Panc1 (cell line): ENCODE measurements at regions of chr5 and their contacts with region 1.

Region 1: GRCh38 chr5:140273401-140273877 is 29.5 kb downstream of the PFDN1 start:
- DNase-seq: no peak
- ATAC-seq: no peak
- H3K4me3 ChIP-seq: no peak overlapping the region
- H3K27ac ChIP-seq: no peak overlapping the region
- H3K4me1 ChIP-seq: no peaks in the 10 kb centered on the region
- H3K27me3 ChIP-seq: no peaks in the 10 kb centered on the region
- CTCF ChIP-seq: no peak

Region 2: GRCh38 chr5:140094889-140095288 is 178.6 kb before region 1 on chr5:
- CTCF ChIA-PET with region 1: no interaction called
- POLR2A ChIA-PET with region 1: no interaction called
- in situ Hi-C with region 1: no loop called
- intact Hi-C with region 1: no loop called
- DNase-seq: no peak
- ATAC-seq: no peak
- H3K4me3 ChIP-seq: no peak overlapping the region
- H3K27ac ChIP-seq: no peak overlapping the region
- H3K4me1 ChIP-seq: no peaks in the 10 kb centered on the region
- H3K27me3 ChIP-seq: peaks cover 4% of the 10 kb centered on the region; the same call in 1 of the 2 replicates
- CTCF ChIP-seq: no peak

Region 3: DNA sequence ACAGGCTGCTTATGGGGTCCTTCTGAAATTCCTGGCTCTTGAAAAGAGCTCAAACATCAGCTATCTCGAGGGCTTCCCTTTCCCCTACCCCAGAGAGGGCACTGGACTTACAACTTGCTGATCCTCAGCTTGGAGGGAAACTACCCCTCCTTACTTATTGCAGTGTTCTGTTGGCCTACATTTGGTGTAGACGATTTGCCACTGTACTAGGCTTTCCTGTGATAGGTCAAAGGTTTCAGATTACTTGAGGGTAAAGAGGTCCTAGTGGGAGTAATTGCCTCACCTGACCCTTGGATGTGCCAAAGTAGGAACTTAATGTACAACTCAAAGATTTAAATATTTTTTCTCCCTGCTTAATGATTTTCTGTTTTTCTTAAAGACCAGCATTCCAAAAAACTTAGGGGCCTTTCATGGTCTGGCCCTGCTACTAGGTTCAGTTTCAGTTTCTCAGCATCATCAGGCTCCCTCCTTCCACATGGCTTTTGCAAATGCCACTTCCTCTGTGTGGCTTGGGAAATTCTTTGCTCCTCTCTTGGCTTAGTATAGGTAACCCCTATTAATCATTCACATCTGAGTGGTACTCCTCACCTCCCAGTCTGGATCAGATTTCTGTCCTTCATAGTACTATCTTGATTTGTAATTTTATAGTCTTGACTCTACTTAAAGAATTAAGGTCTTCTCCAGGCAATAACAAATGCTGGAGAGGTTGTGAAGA is 66.0 kb before region 1 on chr5:
- CTCF ChIA-PET with region 1: no interaction called
- POLR2A ChIA-PET with region 1: no interaction called
- in situ Hi-C with region 1: no loop called
- intact Hi-C with region 1: no loop called
- DNase-seq: no peak
- ATAC-seq: no peak
- H3K4me3 ChIP-seq: no peak overlapping the region
- H3K27ac ChIP-seq: no peak overlapping the region
- H3K4me1 ChIP-seq: peaks cover 5% of the 10 kb centered on the region; the same call in 1 of the 2 replicates
- H3K27me3 ChIP-seq: no peaks in the 10 kb centered on the region
- CTCF ChIP-seq: no peak

Region 4: DNA sequence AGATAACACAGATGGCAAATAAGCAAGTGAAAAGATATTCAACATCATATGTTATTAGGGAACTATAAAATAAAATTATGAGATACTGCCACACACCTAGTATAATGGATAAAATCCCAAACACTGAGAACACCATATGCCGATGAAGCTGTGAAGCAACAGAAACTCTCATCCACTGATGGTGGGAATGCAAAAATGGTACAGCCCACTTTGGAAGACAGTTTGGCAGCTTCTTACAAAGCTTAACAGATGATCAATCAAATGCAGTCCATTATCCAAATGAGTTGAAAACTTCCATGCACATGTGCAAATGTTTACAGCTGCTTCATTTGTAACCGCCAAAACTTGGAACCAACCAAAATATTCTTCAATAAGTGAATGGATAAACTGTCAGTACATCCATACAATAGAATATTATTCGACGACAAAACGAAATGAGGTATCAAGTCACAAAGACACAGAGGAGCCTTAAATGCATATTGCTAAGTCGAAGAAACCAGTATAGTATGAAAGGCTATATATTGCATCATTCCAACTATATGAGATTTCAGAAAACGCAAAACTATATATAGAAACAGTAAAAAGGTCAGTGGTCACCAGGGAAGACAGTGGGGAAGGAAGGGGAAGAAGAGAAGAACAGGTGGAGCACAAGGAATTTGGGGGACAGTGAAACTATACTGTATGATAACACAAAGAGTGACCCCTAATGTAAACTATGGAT is 14.5 kb after region 1 on chr5:
- CTCF ChIA-PET with region 1: interaction called, 10 read pairs
- POLR2A ChIA-PET with region 1: no interaction called
- in situ Hi-C with region 1: no loop called
- intact Hi-C with region 1: no loop called
- DNase-seq: no peak
- ATAC-seq: no peak
- H3K4me3 ChIP-seq: no peak overlapping the region
- H3K27ac ChIP-seq: no peak overlapping the region
- H3K4me1 ChIP-seq: peaks cover 17% of the 10 kb centered on the region
- H3K27me3 ChIP-seq: no peaks in the 10 kb centered on the region
- CTCF ChIP-seq: no peak